IMR-90 (cell line): ENCODE measurements at regions of chr17 and their contacts with region 1.

Region 1: GRCh38 chr17:66548158-66548557 is 245.7 kb downstream of the PRKCA start:
- DNase-seq: no peak
- ATAC-seq: no peak
- H3K4me3 ChIP-seq: no peak overlapping the region
- H3K27ac ChIP-seq: peak overlapping the region; percentile 79
- H3K4me1 ChIP-seq: peaks cover 33% of the 10 kb centered on the region
- H3K27me3 ChIP-seq: no peaks in the 10 kb centered on the region
- CTCF ChIP-seq: no peak
- POLR2A ChIP-seq: no peak
- RAD21 ChIP-seq: no peak

Region 2: GRCh38 chr17:66152756-66153155 is 395.4 kb before region 1 on chr17:
- CTCF ChIA-PET with region 1: no interaction called
- POLR2A ChIA-PET with region 1: interaction called, 14 read pairs
- dilution Hi-C with region 1: no loop called
- in situ Hi-C with region 1: no loop called
- intact Hi-C with region 1: no loop called
- DNase-seq: peak; percentile 25
- ATAC-seq: no peak
- H3K4me3 ChIP-seq: no peak overlapping the region
- H3K27ac ChIP-seq: no peak overlapping the region
- H3K4me1 ChIP-seq: no peaks in the 10 kb centered on the region; the same call in 1 of the 2 replicates
- H3K27me3 ChIP-seq: no peaks in the 10 kb centered on the region
- CTCF ChIP-seq: no peak
- POLR2A ChIP-seq: no peak
- RAD21 ChIP-seq: no peak